ENCODE measurements at regions of chr12 and their contacts with region 1.

Region 1: GRCh38 chr12:51951199-51951842 is at the start of gene ACVR1B:
- DNase-seq: peak; percentile 92
- ATAC-seq: peak; percentile 97
- H3K4me3 Mint-ChIP-seq: peak within 1 kb of the TSS; percentile 86
- H3K27ac Mint-ChIP-seq: peak within 1 kb of the TSS; percentile 69
- H3K4me1 Mint-ChIP-seq: peaks cover 35% of the 10 kb centered on the region
- H3K27me3 Mint-ChIP-seq: peaks cover 8% of the 10 kb centered on the region
- CTCF ChIP-seq: no peak
- total RNA-seq, gene ACVR1B: 7.5 to 8.6 TPM

Region 2: DNA sequence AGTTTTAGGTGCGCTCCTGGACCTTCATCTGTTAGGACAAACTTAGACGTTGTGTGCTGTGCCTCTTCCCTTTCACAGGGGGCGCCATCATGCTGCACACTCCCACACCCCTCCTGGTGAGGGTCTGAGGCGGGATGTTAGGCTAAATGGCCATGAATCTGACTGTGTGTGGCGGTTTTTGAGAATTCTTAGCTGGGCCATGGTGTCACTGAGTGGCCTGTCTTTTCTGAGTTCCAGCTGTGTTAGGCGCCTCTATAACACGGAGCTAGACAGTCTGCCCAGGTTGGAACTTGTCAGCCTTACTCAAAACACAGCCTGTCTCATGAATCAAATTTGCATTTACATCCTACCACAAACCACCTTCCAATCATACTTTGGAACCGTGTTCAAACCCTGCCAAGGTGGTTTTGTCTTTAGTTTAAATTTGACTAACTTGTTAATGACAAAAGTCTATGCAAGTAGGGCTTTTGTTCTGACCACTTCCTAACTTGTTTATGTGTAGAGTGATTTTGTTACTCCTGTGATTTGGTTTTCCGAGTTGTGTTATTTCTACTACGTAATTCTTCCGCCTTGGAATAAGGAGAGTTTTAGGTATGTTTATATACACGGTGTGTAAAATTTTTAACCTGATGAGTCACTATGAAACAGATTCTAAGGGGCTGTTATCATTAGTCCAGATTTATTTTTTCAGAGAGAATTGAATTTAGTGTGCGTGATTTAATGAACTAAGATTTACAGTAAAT is 19.8 kb after region 1 on chr12:
- CTCF ChIA-PET with region 1: interaction called, 29 read pairs
- POLR2A ChIA-PET with region 1: interaction called, 8 read pairs
- intact Hi-C with region 1: loop called (anchors 1 kb)
- DNase-seq: peak; percentile 75
- ATAC-seq: peak; percentile 83
- H3K4me3 Mint-ChIP-seq: peak overlapping the region; percentile 29
- H3K27ac Mint-ChIP-seq: peak overlapping the region; percentile 62
- H3K4me1 Mint-ChIP-seq: peaks cover 61% of the 10 kb centered on the region
- H3K27me3 Mint-ChIP-seq: no peaks in the 10 kb centered on the region
- CTCF ChIP-seq: peak; percentile 87